PC-3 (cell line): ENCODE measurements at regions of chr14 and their contacts with region 1.

Region 1: GRCh38 chr14:68685419-68686204 is 107.3 kb downstream of the ZFP36L1 start:
- DNase-seq: peak; percentile 95
- ATAC-seq: peak; percentile 67
- H3K4me3 ChIP-seq: no peak overlapping the region
- H3K27ac ChIP-seq: peak overlapping the region; percentile 96
- H3K4me1 ChIP-seq: peaks cover 75% of the 10 kb centered on the region
- H3K27me3 ChIP-seq: no peaks in the 10 kb centered on the region
- CTCF ChIP-seq: no peak

Region 2: DNA sequence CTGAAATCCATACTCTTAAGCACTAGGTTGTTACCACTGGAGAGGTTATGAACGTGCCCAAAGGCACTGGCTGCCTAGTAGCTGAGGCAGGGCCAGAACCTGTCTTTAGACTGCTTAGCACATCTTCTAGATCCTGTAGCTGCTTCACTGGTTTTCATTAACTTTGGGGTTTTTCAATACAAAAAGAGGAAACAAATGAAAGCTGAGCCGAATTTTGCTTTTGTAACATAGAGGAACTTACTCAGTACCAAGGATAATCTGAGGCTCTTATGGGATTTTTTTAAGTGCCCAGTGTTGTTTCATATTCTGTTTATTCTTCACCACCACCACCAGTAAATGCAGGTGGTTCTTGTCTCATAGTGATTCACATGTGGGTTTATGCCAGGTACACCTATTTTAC is 470.0 kb before region 1 on chr14:
- CTCF ChIA-PET with region 1: no interaction called
- POLR2A ChIA-PET with region 1: no interaction called
- intact Hi-C with region 1: no loop called
- DNase-seq: peak; percentile 44
- ATAC-seq: peak; percentile 42; the same call in 1 of the 2 replicates
- H3K4me3 ChIP-seq: no peak overlapping the region
- H3K27ac ChIP-seq: no peak overlapping the region
- H3K4me1 ChIP-seq: peaks cover 21% of the 10 kb centered on the region
- H3K27me3 ChIP-seq: no peaks in the 10 kb centered on the region
- CTCF ChIP-seq: no peak

Region 3: GRCh38 chr14:68255697-68256203 is 429.9 kb before region 1 on chr14:
- CTCF ChIA-PET with region 1: interaction called, 4 read pairs
- POLR2A ChIA-PET with region 1: interaction called, 8 read pairs
- intact Hi-C with region 1: loop called (anchors 1 kb)
- DNase-seq: peak; percentile 94
- ATAC-seq: peak; percentile 98
- H3K4me3 ChIP-seq: no peak overlapping the region
- H3K27ac ChIP-seq: peak overlapping the region; percentile 29
- H3K4me1 ChIP-seq: peaks cover 33% of the 10 kb centered on the region
- H3K27me3 ChIP-seq: no peaks in the 10 kb centered on the region
- CTCF ChIP-seq: no peak

Region 4: DNA sequence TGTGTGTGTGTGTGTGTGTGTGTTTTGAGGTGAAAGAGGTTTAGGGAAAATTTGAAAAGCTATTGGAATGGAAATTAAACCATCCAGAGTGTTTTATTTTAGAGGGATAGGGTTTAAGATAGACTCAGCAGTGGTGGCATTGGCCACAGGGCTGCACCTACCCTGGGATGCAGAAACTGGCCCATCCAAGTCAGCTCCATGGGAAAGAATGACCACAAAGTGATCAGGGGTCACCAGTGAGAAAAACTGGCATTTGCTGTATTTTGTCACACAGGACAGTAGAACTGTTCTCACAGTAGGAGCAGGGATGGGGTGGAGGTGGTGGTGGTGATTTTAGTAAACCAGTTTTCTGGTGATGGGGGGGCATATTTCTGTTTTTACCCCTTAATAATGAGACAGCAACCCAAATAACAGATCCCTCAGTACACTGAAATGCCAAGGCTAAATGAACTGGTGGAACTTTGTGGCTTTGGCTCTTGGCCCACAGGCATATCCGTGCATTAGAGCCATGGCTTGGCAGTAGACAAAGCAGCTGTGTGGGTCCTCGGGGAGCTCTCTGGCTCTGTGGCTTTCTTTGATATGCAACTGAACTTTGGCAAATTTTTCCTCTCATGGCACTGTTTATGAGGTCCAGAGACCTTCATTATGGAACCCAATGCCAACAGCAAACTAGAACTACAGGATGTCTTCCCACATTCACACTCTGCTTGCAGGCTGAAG is 241.0 kb before region 1 on chr14:
- CTCF ChIA-PET with region 1: interaction called, 3 read pairs
- POLR2A ChIA-PET with region 1: no interaction called
- intact Hi-C with region 1: loop called (anchors 2 kb)
- DNase-seq: peak; percentile 64
- ATAC-seq: peak; percentile 44
- H3K4me3 ChIP-seq: no peak overlapping the region
- H3K27ac ChIP-seq: no peak overlapping the region
- H3K4me1 ChIP-seq: peaks cover 42% of the 10 kb centered on the region
- H3K27me3 ChIP-seq: no peaks in the 10 kb centered on the region
- CTCF ChIP-seq: no peak

Region 5: GRCh38 chr14:68598621-68599447 is 86.8 kb before region 1 on chr14:
- CTCF ChIA-PET with region 1: no interaction called
- POLR2A ChIA-PET with region 1: no interaction called
- intact Hi-C with region 1: loop called (anchors 1 kb)
- DNase-seq: peak; percentile 97
- ATAC-seq: peak; percentile 92
- H3K4me3 ChIP-seq: peak overlapping the region; percentile 60
- H3K27ac ChIP-seq: peak overlapping the region; percentile 99
- H3K4me1 ChIP-seq: peaks cover 27% of the 10 kb centered on the region
- H3K27me3 ChIP-seq: no peaks in the 10 kb centered on the region
- CTCF ChIP-seq: no peak

Region 6: GRCh38 chr14:68665792-68666204 is 19.8 kb before region 1 on chr14:
- CTCF ChIA-PET with region 1: interaction called, 12 read pairs
- POLR2A ChIA-PET with region 1: interaction called, 5 read pairs
- intact Hi-C with region 1: no loop called
- DNase-seq: no peak
- ATAC-seq: peak; percentile 64
- H3K4me3 ChIP-seq: no peak overlapping the region
- H3K27ac ChIP-seq: no peak overlapping the region
- H3K4me1 ChIP-seq: peaks cover 13% of the 10 kb centered on the region
- H3K27me3 ChIP-seq: no peaks in the 10 kb centered on the region
- CTCF ChIP-seq: no peak

Region 7: GRCh38 chr14:68788996-68789820 is 103.6 kb after region 1 on chr14:
- CTCF ChIA-PET with region 1: interaction called, 9 read pairs
- POLR2A ChIA-PET with region 1: interaction called, 55 read pairs
- intact Hi-C with region 1: no loop called
- DNase-seq: peak; percentile 89
- ATAC-seq: peak; percentile 19
- H3K4me3 ChIP-seq: peak overlapping the region; percentile 90
- H3K27ac ChIP-seq: peak overlapping the region; percentile 97
- H3K4me1 ChIP-seq: peaks cover 56% of the 10 kb centered on the region
- H3K27me3 ChIP-seq: no peaks in the 10 kb centered on the region
- CTCF ChIP-seq: peak; percentile 86